OCI-LY7 (cell line): ENCODE measurements at regions of chr16 and their contacts with region 1.

Region 1: DNA sequence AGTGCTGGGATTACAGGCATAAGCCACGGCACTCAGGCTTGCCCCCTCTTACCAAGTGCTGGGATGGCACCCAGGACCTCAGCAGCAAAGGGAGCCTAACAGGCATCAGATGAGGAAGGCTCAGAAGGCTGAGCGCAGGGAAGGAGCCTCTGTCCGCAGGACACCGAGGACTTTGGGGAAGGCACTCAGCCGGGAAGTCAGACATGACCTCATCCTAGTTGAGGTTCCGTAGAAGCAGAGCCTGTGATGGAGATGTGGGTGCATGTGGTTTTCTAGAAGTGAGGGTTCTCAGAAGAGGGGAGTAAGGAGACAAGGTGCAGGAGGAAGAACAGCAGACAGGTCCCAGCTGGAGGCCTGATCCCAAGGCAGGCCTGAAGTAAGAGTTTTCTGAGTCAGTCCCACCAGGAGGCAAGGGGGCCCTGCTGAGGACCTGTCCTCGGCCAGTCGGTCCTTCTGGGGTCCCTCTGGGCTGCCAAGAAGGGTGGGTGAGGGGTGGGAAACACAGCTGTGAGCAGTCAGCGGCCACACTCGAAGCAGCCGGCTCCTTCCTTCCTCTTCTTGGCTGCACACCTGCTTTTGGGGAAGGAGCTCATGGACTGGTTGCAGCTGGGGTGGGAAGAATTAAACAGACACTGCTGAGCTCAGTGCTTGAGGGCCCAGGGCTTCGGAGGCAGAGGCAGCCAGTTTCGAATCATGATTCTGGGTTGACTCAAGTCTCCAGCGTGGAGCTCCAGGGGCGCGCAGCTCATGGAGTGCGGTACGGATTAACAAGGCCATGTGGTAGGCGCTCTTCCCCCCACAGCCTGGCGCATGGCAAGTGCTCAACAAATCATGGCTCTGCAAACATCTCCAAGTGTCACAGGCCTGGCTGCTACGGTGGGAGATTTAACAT is 38.9 kb upstream of the SNN start:
- DNase-seq: peak; percentile 83
- H3K4me3 ChIP-seq: no peak overlapping the region
- H3K27ac ChIP-seq: peak overlapping the region; percentile 69
- H3K4me1 ChIP-seq: peaks cover 70% of the 10 kb centered on the region
- CTCF ChIP-seq: no peak

Region 2: GRCh38 chr16:11682655-11683096 is 53.4 kb after region 1 on chr16:
- CTCF ChIA-PET with region 1: no interaction called
- POLR2A ChIA-PET with region 1: interaction called, 4 read pairs
- intact Hi-C with region 1: loop called (anchors 2 kb)
- DNase-seq: no peak
- H3K4me3 ChIP-seq: peak overlapping the region; percentile 59
- H3K27ac ChIP-seq: peak overlapping the region; percentile 98
- H3K4me1 ChIP-seq: peaks cover 100% of the 10 kb centered on the region
- CTCF ChIP-seq: no peak